CD4-positive, alpha-beta T cell (primary cell): ENCODE measurements at regions of chr6 and their contacts with region 1.

Region 1: DNA sequence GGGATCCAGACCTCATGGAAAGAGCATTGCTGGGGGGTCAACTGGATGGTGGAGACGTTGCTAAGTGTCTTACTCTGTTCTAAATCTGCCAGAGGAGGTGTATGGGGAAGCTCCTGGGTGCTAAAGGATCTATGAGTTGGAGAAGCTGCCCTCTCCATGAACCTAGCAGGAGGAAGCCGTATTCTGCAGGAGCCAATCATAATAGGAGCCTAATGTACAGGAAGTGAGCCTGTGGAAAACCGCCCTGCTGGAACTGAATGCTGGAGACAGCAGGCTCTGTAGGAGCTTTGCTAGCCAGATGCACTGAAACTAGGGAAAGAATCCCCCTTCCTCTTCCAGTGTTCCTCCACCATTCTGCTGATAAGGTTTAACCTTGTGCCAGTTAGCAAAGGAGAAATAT is 10.9 kb downstream of the CASP8AP2 start:
- DNase-seq: no peak
- ATAC-seq: no peak
- H3K4me3 ChIP-seq: no peak overlapping the region
- H3K4me3 Mint-ChIP-seq: peak overlapping the region; percentile 8
- H3K27ac ChIP-seq: no peak overlapping the region
- H3K27ac Mint-ChIP-seq: peak overlapping the region; percentile 5
- H3K4me1 ChIP-seq: peaks cover 52% of the 10 kb centered on the region
- H3K4me1 Mint-ChIP-seq: peaks cover 63% of the 10 kb centered on the region
- H3K27me3 ChIP-seq: no peaks in the 10 kb centered on the region
- H3K27me3 Mint-ChIP-seq: no peaks in the 10 kb centered on the region
- CTCF ChIP-seq: no peak

Region 2: DNA sequence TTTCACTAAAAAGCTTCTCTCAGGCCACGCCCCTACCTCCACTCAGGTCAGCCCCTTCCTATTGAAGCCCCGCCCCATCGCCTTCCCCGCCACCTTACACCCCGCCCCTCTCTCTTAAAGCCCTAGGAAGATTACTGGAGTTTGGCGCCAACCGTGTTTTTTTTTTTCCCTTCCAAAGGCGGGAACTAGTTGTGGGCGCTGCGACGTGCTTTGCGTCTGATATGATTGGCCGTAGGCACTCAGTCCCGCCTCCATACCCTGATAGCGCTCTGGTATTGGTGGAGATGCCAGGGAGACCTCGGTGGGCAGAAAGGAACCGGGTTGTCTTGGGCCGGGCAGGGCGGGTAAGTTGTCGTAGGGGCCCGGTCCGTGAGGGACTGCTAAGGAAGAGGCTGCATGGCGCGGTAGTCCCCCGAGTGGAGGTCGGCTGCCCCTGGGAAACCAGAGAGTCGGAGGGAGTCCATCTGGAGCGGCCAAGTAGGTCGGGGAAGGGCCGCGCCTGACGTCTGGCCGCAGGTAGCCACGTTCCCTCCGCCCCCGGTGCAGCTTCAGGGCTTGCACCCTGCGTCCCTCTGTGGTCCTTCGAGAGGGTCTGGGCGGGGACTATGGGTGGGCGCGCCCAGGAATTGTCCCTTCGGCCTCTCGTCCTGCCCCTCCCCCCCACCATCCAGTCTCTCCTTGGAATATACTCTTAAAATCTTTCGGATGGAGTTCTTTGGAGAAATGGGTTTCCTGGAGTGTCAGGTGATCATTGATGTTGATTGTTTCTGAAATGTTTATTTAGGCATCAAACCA is 10.8 kb before region 1 on chr6 and contains the start of gene CASP8AP2:
- CTCF ChIA-PET with region 1: interaction called, 3 read pairs
- POLR2A ChIA-PET with region 1: interaction called, 14 read pairs
- intact Hi-C with region 1: no loop called
- DNase-seq: peak; percentile 86 to 99 (median 92)
- ATAC-seq: peak; percentile 93
- H3K4me3 ChIP-seq: peak within 1 kb of the TSS; percentile 100
- H3K4me3 Mint-ChIP-seq: peak within 1 kb of the TSS; percentile 94
- H3K27ac ChIP-seq: peak within 1 kb of the TSS; percentile 68 to 86
- H3K27ac Mint-ChIP-seq: peak within 1 kb of the TSS; percentile 91
- H3K4me1 ChIP-seq: peaks cover 33% of the 10 kb centered on the region
- H3K4me1 Mint-ChIP-seq: peaks cover 35% of the 10 kb centered on the region
- H3K27me3 ChIP-seq: no peaks in the 10 kb centered on the region
- H3K27me3 Mint-ChIP-seq: no peaks in the 10 kb centered on the region
- CTCF ChIP-seq: no peak
- total RNA-seq, gene CASP8AP2: 17.3 to 20.0 TPM

Region 3: GRCh38 chr6:89927791-89928550 is 87.4 kb after region 1 on chr6:
- CTCF ChIA-PET with region 1: no interaction called
- POLR2A ChIA-PET with region 1: no interaction called
- intact Hi-C with region 1: no loop called
- DNase-seq: peak in 1 of 14 experiments; percentile 14
- ATAC-seq: no peak
- H3K4me3 ChIP-seq: no peak overlapping the region
- H3K4me3 Mint-ChIP-seq: no peak overlapping the region
- H3K27ac ChIP-seq: no peak overlapping the region
- H3K27ac Mint-ChIP-seq: peak overlapping the region; percentile 72
- H3K4me1 ChIP-seq: peaks cover 9% of the 10 kb centered on the region
- H3K4me1 Mint-ChIP-seq: peaks cover 51% of the 10 kb centered on the region
- H3K27me3 ChIP-seq: no peaks in the 10 kb centered on the region
- H3K27me3 Mint-ChIP-seq: no peaks in the 10 kb centered on the region
- CTCF ChIP-seq: no peak